ENCODE measurements at regions of chr6 and their contacts with region 1.

Region 1: GRCh38 chr6:44431118-44431725 is 43.7 kb downstream of the CDC5L start:
- DNase-seq: peak; percentile 21 to 45 (median 33)
- H3K4me3 ChIP-seq: no peak overlapping the region
- H3K4me3 Mint-ChIP-seq: no peak overlapping the region
- H3K27ac ChIP-seq: no peak overlapping the region
- H3K27ac Mint-ChIP-seq: peak overlapping the region in 2 of 7 donors; percentile 36 to 55
- H3K4me1 ChIP-seq: no peaks in the 10 kb centered on the region
- H3K4me1 Mint-ChIP-seq: peaks cover 0 to 16% (median 8%) of the 10 kb centered on the region in 4 donors
- H3K27me3 ChIP-seq: no peaks in the 10 kb centered on the region
- H3K27me3 Mint-ChIP-seq: no peaks in the 10 kb centered on the region

Region 2: DNA sequence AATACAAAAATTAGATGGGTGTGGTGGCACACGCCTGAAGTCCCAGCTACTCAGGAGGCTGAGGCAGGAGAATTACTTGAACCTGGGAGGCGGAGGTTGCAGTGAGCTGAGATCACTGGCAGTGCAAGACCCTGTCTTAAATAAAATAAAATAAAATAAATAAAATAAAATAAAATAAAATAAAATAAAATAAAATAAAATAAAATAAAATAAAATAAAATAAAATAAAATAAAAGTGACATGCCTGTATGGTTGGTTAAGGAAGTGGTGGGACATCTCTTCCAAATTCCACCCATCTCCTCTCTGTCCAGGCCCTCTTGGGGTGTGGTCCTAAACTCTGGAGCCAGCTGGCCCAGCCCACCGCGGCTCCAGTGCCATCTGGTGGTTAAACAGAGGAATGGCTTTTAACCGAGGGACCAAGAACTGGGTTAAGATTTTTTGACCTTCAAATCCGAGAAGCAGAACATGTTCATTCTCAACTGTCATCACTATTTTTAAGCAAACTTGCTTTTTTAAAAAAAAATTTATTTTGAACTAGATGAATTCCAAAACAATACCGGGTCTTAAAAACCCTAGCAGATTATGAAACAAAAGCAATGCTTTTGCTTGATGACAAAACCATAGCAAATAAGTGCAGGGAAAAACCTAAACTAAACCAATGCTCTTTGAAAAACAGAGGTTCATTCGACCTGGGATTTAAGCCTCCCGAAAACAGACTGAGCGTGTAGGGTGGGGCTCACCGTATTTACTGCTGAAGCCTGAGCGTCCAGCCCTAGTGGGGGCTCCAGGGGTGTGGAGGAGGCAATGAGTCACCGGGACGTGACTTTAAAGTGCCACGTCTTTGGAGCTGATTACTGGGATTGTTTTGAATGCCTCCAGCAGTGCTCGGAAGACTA is 25.1 kb after region 1 on chr6:
- CTCF ChIA-PET with region 1: interaction called, 94 read pairs
- POLR2A ChIA-PET with region 1: no interaction called
- intact Hi-C with region 1: loop called (anchors 1 kb)
- DNase-seq: peak in 4 of 5 donors; percentile 16 to 35 (median 26)
- H3K4me3 ChIP-seq: no peak overlapping the region
- H3K4me3 Mint-ChIP-seq: no peak overlapping the region
- H3K27ac ChIP-seq: no peak overlapping the region
- H3K27ac Mint-ChIP-seq: peak overlapping the region in 2 of 7 donors; percentile 29 to 34
- H3K4me1 ChIP-seq: no peaks in the 10 kb centered on the region
- H3K4me1 Mint-ChIP-seq: peaks cover 0 to 5% (median 0%) of the 10 kb centered on the region in 4 donors
- H3K27me3 ChIP-seq: no peaks in the 10 kb centered on the region
- H3K27me3 Mint-ChIP-seq: peaks cover 0 to 8% of the 10 kb centered on the region in 2 donors